ENCODE measurements at regions of chr10 and their contacts with region 1.

Region 1: GRCh38 chr10:124641282-124642087 is 102.7 kb downstream of the FAM53B start:
- DNase-seq: no peak
- H3K4me3 Mint-ChIP-seq: peak overlapping the region; percentile 15
- H3K27ac Mint-ChIP-seq: peak overlapping the region; percentile 65
- H3K4me1 Mint-ChIP-seq: peaks cover 30% of the 10 kb centered on the region
- H3K27me3 Mint-ChIP-seq: no peaks in the 10 kb centered on the region

Region 2: GRCh38 chr10:124732931-124733570 is 91.6 kb after region 1 on chr10:
- intact Hi-C with region 1: loop called (anchors 1 kb)
- DNase-seq: no peak
- H3K4me3 Mint-ChIP-seq: peak overlapping the region; percentile 34
- H3K27ac Mint-ChIP-seq: peak overlapping the region; percentile 77
- H3K4me1 Mint-ChIP-seq: peaks cover 57% of the 10 kb centered on the region
- H3K27me3 Mint-ChIP-seq: no peaks in the 10 kb centered on the region

Measured in activated T-helper 2 cell treated with anti-CD3 and anti-CD28 coated beads, Interferon-gamma antibody, Interleukin-2, Interleukin-4, amounts not matched to agents 10 μg/mL and 5 μg/mL and 100 μg/mL, durations not matched to agents 14 hours and 24 hours and 36 hours (primary cell).